AG04449 (cell line): ENCODE measurements at regions of chr1 and their contacts with region 1.

Region 1: GRCh38 chr1:109984456-109985275 is at the start of gene AHCYL1:
- DNase-seq: peak; percentile 87
- H3K4me3 ChIP-seq: peak within 1 kb of the TSS; percentile 82
- CTCF ChIP-seq: peak; percentile 97

Region 2: GRCh38 chr1:109432336-109432735 is 552.3 kb before region 1 on chr1:
- CTCF ChIA-PET with region 1: no interaction called
- POLR2A ChIA-PET with region 1: no interaction called
- DNase-seq: peak; percentile 37
- H3K4me3 ChIP-seq: no peak overlapping the region
- CTCF ChIP-seq: no peak

Region 3: DNA sequence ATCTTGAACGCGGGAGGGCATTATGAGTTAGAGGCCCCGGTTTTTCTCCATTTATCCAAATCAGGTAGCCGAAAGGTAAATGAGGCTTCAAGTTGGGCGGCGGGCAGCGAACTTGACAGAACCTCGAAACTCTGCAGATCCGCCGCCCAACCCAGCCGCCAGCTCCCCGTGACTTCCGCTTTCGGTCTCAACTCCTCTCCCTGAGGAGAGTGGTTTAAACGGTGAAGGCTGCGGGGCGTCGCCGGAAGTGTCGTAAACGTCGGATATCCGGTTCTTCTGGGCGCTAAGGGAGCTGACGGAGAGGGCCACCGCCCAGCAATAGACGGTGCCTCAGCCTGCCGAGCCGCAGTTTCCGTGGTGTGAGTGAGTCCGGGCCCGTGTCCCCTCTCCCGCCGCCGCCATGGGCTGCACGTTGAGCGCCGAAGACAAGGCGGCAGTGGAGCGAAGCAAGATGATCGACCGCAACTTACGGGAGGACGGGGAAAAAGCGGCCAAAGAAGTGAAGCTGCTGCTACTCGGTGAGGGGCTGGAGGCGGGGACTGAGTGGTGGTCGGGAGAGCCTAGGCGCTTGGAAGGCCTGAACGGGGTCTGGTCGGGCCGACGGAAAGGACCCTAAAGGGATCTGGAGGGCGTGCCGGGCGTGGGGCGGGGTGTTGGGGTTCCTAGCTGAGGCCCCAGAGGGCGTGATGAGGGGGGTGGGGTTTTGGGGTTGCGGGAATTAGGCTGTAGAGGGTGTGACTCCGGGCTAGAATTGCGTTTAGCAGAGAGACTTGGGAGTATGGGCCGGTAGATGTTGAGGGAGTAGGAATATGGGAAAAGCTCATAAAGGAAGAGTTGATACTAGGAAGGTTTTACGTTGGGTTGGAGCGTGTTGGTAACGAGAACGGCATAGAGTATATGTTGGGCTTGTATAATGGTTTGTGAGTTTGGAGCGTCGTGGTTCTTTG is 436.1 kb before region 1 on chr1 and contains the start of gene GNAI3:
- CTCF ChIA-PET with region 1: interaction called, 38 read pairs
- POLR2A ChIA-PET with region 1: interaction called, 5 read pairs
- DNase-seq: peak; percentile 72
- H3K4me3 ChIP-seq: peak within 1 kb of the TSS; percentile 95
- CTCF ChIP-seq: no peak

Region 4: GRCh38 chr1:109773146-109773899 is 211.3 kb before region 1 on chr1:
- CTCF ChIA-PET with region 1: interaction called, 1,425 read pairs
- POLR2A ChIA-PET with region 1: interaction called, 18 read pairs
- DNase-seq: peak; percentile 40
- H3K4me3 ChIP-seq: no peak overlapping the region
- CTCF ChIP-seq: peak; percentile 96

Region 5: DNA sequence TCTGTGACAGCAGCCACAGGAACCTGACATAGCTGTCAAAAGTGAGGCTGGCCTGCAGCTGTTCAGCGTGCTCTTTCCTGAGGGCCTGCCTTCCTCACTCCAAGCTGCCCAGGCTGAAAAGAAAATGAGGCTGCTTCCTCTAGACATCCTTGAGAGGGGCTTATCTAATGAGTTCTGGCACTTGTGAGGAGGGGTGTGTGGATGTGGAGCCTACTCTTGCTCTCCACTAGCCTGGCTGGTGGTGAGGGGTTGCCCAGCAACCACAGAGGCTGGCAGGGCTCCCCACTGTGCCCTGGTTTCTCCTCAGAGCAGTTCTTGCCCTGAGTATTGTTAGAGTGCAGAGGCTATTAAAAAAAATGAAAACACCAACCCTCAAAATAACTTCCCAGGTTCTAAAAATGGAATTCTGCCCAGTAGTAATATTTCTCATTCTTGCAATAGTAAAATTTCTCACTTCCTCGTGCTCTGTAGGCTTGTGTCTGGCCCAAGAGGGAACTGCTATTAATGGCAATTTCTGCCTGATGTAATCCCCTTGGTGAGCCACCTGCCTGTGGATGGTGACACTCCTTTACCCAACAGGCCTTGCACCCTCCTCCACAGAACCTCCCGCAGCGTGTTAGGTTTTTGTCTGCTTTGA is 168.4 kb before region 1 on chr1:
- CTCF ChIA-PET with region 1: interaction called, 11 read pairs
- POLR2A ChIA-PET with region 1: no interaction called
- DNase-seq: no peak
- H3K4me3 ChIP-seq: no peak overlapping the region
- CTCF ChIP-seq: no peak

Region 6: DNA sequence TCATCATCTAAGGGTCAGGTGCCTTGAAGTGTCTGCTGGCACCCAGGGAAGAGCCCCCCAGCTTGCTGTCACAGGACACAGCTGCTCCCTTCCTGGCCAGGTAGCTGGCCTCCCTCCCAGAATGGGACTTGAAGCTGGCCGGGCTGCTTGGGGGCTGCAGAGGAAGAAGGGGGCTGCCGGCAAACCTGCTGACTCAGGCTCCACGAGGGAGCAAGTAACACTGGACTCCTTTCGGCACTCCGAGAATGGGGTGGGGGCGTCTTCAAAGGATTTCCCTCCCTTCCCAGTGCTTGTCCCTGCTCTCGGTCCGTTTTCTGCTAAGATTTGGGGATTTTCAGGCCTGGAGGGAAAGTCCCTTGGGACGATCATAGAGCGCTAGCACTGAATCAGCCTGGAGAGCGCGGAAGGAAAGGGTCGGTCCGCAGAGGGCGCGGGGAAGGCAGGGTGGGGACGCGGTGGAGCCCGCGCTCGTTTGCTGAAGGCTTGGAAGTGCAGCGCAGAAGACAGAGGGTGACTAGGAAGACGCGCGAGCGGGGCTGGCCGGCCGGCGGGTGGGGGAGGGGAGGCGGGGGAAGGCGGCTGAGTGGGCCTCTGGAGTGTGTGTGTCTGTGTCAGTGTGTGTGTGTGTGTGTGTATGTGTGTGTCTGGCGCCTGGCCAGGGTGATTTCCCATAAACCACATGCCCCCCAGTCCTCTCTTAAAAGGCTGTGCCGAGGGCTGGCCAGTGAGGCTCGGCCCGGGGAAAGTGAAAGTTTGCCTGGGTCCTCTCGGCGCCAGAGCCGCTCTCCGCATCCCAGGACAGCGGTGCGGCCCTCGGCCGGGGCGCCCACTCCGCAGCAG is 74.3 kb before region 1 on chr1 and contains the start of gene CSF1:
- CTCF ChIA-PET with region 1: interaction called, 38 read pairs
- POLR2A ChIA-PET with region 1: no interaction called
- DNase-seq: no peak
- H3K4me3 ChIP-seq: peak within 1 kb of the TSS; percentile 97
- CTCF ChIP-seq: no peak

Region 7: GRCh38 chr1:109931189-109931731 is 53.4 kb before region 1 on chr1:
- CTCF ChIA-PET with region 1: interaction called, 42 read pairs
- POLR2A ChIA-PET with region 1: no interaction called
- DNase-seq: no peak
- H3K4me3 ChIP-seq: no peak overlapping the region
- CTCF ChIP-seq: no peak

Region 8: DNA sequence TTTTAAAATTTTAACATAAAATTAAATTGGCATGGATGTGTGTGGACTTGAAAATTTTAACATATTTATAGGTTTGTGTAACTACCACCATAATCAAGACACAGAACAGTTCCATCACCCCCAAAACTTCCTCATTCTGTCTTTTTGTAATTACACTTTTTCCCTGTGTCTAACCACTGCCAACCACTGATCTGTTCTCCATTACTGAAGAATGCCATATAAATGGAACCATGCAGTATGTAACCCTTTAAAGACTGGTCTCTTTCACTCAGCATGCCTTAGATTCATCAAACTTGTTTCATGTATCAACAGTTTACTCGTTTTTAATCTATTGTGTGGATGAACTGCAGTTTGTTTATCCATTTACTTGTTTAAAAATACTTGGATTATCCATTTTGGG is 13.1 kb before region 1 on chr1:
- CTCF ChIA-PET with region 1: interaction called, 32 read pairs
- POLR2A ChIA-PET with region 1: interaction called, 3 read pairs
- DNase-seq: no peak
- H3K4me3 ChIP-seq: no peak overlapping the region
- CTCF ChIP-seq: no peak

Region 9: DNA sequence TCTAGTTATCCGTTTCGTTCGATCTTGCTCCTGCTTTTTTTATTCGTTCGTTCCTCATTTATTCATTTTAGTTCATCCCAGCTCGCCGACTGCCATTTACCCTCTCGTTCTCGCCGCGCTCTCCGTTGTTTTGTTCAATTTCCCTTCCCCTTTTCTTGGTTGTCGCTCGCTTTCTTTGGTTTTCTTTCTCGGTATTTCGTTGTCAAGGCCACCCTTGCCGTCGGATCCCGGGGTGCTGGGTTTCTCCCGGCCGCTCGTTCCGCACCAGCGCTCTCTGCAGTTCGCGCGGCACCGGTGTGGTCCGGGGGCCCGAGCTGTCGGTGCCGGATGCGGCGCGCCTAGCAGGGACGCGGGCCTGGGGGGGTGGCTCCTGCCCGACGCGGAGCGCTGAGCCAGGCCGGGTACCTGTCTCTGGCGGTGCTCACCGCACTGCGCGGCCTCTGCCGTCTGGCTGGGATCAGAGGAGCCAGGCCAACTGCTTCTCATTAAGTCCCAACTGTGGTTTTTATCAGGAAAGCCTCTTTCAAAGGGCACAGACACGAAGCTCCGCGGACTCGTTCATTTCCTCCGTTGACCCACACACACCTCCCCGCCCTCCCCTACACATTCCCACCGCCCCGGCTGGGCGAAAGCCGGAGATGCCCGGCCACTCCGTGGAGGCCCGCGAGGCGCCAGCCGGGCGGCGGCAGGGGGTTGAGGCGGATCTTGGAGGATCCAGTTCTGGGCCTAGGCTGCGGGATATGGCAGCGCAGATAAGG is 84.2 kb after region 1 on chr1:
- CTCF ChIA-PET with region 1: no interaction called
- POLR2A ChIA-PET with region 1: no interaction called
- DNase-seq: no peak
- H3K4me3 ChIP-seq: no peak overlapping the region
- CTCF ChIP-seq: no peak

Region 10: GRCh38 chr1:110188035-110188618 is 203.5 kb after region 1 on chr1:
- CTCF ChIA-PET with region 1: no interaction called
- POLR2A ChIA-PET with region 1: no interaction called
- DNase-seq: no peak
- H3K4me3 ChIP-seq: no peak overlapping the region
- CTCF ChIP-seq: no peak

Region 11: DNA sequence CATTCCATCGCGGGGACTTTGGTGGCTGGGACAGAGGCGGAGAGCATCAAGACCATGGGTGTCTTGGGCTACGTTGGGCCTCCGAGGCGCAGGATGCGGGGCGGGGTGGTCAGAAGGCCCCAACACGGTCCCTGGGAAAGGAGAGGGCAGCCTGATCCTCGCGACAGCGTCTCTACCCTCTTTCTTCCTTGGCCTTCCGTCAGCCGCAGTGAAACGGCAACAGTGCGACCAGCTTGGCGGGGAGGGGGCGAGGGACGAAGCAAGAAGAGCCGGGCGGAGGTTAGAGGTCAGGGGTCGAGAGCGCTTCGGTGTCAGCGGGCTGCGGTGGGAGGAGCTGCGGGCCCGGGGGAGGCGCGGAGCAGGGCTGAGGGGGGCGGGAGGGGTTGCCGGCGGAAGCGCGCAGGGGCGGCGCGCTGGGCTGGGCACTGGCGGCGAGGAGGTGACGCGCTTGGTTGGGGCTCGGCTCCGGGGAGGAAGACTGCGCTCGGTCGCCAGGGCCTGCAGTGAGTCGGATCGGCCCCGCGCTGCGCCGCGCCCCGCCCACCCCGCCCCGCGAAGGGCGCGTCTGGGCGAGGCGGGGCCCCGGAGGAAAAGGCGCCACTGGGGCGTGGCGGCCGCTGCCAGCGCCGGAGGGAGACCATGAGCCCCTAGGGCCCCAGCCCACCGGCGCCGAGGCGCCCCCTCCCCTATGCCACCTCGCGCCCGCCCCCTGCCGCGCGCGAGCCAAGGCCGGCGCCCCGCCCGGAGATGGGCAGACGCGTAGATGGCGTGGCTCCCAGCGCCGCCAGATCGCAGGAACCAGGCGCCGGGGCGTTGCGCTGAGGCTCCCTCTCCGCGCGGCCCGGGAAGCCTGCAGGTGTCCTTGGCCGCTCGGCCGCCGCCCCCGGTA is 225.3 kb after region 1 on chr1 and contains the start of gene KCNC4:
- CTCF ChIA-PET with region 1: no interaction called
- POLR2A ChIA-PET with region 1: no interaction called
- DNase-seq: no peak
- H3K4me3 ChIP-seq: peak within 1 kb of the TSS; percentile 57
- CTCF ChIP-seq: no peak